Naive thymus-derived CD4-positive, alpha-beta T cell (primary cell): ENCODE measurements at regions of chr1 and their contacts with region 1.

Region 1: DNA sequence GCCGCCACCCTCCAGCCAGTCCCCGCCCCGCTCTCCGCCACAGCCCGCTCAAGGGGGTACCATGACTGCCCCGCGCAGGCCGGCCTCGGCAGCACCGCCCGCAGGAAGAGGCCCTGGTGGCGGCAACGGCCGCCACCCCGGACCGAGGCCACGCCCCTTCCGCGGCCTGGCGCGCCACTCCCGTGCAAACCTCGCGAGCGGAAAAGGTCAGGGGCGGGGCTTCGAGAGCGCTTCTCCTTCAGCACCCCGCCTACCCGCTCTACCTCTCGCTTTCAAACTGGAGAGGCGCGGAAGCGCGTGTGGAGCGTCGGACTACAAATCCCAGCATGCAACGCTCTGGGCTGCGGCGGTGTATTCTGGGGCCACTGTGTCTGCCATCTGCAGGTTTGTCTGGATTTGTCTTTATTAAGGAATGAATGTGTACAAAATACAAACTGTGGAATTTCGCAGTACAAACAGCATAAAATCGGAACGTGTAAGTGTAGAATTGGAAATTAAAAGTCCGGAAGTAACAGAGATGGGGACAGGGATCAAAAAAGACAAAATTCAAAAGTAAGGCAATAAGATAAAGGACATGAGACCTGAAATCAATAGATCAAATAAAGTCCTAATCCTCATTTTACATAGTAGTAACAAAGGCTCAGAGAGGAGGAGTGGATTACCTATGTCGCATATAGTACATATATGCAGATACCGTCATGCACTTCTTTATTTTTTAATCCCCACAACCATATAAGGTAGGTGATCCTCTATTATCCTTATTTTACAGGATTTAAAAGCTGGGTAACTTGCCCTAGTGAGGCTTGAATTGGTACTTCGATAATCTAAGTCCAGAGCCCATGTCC is 464 bp upstream of the ADSS2 start:
- DNase-seq: peak; percentile 93 to 99 (median 99)
- ATAC-seq: peak; percentile 94
- H3K4me3 ChIP-seq: peak overlapping the region; percentile 64
- H3K4me3 Mint-ChIP-seq: peak overlapping the region; percentile 76 to 99 (median 93)
- H3K27ac ChIP-seq: peak overlapping the region; percentile 96
- H3K27ac Mint-ChIP-seq: peak overlapping the region; percentile 85 to 99 (median 97)
- H3K4me1 ChIP-seq: peaks cover 27 to 36% of the 10 kb centered on the region in 2 donors
- H3K4me1 Mint-ChIP-seq: peaks cover 29 to 56% (median 41%) of the 10 kb centered on the region in 7 donors
- H3K27me3 ChIP-seq: no peaks in the 10 kb centered on the region
- H3K27me3 Mint-ChIP-seq: no peaks in the 10 kb centered on the region

Region 2: DNA sequence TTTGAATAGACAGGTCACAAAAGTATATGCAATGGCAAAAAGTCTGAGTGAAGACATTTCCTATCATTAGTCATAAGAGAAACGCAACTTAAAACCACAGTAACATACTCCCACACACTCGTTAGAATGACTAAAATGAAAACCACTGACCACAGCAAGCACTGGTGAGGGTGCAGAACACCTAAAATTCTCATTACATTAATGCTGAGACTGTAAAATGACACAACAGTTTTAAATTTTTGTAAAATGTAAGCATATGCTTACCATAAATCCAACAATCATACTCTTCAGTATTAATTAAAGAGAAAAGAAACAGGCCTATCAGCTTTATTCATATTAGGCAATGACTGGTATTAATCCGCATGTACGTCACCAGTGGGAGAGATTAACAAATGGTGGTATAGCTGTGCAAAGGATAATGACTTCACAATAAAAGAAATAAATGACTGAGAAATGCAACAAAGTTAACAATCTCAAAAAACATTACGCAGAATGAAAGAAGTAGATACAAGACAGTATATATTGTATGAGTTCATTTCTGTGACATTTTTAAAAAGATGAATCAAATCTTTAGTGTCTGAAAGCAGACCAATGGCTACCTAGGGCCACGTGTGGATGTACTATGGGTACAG is 855.6 kb before region 1 on chr1:
- CTCF ChIA-PET with region 1: no interaction called
- POLR2A ChIA-PET with region 1: no interaction called
- intact Hi-C with region 1: loop called in 1 of 2 experiments (anchors 5 kb)
- DNase-seq: peak in 1 of 9 donors; percentile 36
- ATAC-seq: peak; percentile 81
- H3K4me3 ChIP-seq: no peak overlapping the region
- H3K4me3 Mint-ChIP-seq: peak overlapping the region in 4 of 10 donors; percentile 6 to 73 (median 44)
- H3K27ac ChIP-seq: no peak overlapping the region
- H3K27ac Mint-ChIP-seq: peak overlapping the region in 5 of 9 donors; percentile 28 to 89 (median 40)
- H3K4me1 ChIP-seq: peaks cover 4 to 19% of the 10 kb centered on the region in 2 donors
- H3K4me1 Mint-ChIP-seq: peaks cover 23 to 48% (median 32%) of the 10 kb centered on the region in 7 donors
- H3K27me3 ChIP-seq: no peaks in the 10 kb centered on the region
- H3K27me3 Mint-ChIP-seq: no peaks in the 10 kb centered on the region

Region 3: GRCh38 chr1:244325056-244325764 is 127.0 kb before region 1 on chr1:
- CTCF ChIA-PET with region 1: interaction called, 3 read pairs
- POLR2A ChIA-PET with region 1: no interaction called
- intact Hi-C with region 1: loop called in 1 of 2 experiments (anchors 2 kb)
- DNase-seq: peak in 2 of 9 donors; percentile 5 to 11
- ATAC-seq: peak; percentile 76
- H3K4me3 ChIP-seq: no peak overlapping the region
- H3K4me3 Mint-ChIP-seq: peak overlapping the region in 6 of 10 donors; percentile 4 to 82 (median 70)
- H3K27ac ChIP-seq: no peak overlapping the region
- H3K27ac Mint-ChIP-seq: peak overlapping the region in 6 of 9 donors; percentile 4 to 92 (median 37)
- H3K4me1 ChIP-seq: peaks cover 0 to 28% of the 10 kb centered on the region in 2 donors
- H3K4me1 Mint-ChIP-seq: peaks cover 0 to 51% (median 0%) of the 10 kb centered on the region in 7 donors
- H3K27me3 ChIP-seq: no peaks in the 10 kb centered on the region
- H3K27me3 Mint-ChIP-seq: peaks cover 0 to 6% (median 4%) of the 10 kb centered on the region in 5 donors

Region 4: GRCh38 chr1:244435562-244436205 is 16.5 kb before region 1 on chr1:
- CTCF ChIA-PET with region 1: interaction called, 5 read pairs
- POLR2A ChIA-PET with region 1: no interaction called
- intact Hi-C with region 1: loop called (anchors 2 kb)
- DNase-seq: peak in 1 of 9 donors; percentile 42
- ATAC-seq: no peak
- H3K4me3 ChIP-seq: no peak overlapping the region
- H3K4me3 Mint-ChIP-seq: no peak overlapping the region
- H3K27ac ChIP-seq: no peak overlapping the region
- H3K27ac Mint-ChIP-seq: peak overlapping the region in 3 of 9 donors; percentile 19 to 80 (median 65)
- H3K4me1 ChIP-seq: no peaks in the 10 kb centered on the region
- H3K4me1 Mint-ChIP-seq: peaks cover 21 to 44% (median 35%) of the 10 kb centered on the region in 7 donors
- H3K27me3 ChIP-seq: no peaks in the 10 kb centered on the region
- H3K27me3 Mint-ChIP-seq: no peaks in the 10 kb centered on the region

Region 5: GRCh38 chr1:244802556-244803239 is 350.5 kb after region 1 on chr1:
- CTCF ChIA-PET with region 1: no interaction called
- POLR2A ChIA-PET with region 1: no interaction called
- intact Hi-C with region 1: no loop called
- DNase-seq: no peak
- ATAC-seq: no peak
- H3K4me3 ChIP-seq: no peak overlapping the region
- H3K4me3 Mint-ChIP-seq: no peak overlapping the region
- H3K27ac ChIP-seq: no peak overlapping the region
- H3K27ac Mint-ChIP-seq: no peak overlapping the region
- H3K4me1 ChIP-seq: no peaks in the 10 kb centered on the region
- H3K4me1 Mint-ChIP-seq: peaks cover 0 to 5% (median 4%) of the 10 kb centered on the region in 7 donors
- H3K27me3 ChIP-seq: no peaks in the 10 kb centered on the region
- H3K27me3 Mint-ChIP-seq: peaks cover 0 to 5% (median 0%) of the 10 kb centered on the region in 5 donors

Region 6: DNA sequence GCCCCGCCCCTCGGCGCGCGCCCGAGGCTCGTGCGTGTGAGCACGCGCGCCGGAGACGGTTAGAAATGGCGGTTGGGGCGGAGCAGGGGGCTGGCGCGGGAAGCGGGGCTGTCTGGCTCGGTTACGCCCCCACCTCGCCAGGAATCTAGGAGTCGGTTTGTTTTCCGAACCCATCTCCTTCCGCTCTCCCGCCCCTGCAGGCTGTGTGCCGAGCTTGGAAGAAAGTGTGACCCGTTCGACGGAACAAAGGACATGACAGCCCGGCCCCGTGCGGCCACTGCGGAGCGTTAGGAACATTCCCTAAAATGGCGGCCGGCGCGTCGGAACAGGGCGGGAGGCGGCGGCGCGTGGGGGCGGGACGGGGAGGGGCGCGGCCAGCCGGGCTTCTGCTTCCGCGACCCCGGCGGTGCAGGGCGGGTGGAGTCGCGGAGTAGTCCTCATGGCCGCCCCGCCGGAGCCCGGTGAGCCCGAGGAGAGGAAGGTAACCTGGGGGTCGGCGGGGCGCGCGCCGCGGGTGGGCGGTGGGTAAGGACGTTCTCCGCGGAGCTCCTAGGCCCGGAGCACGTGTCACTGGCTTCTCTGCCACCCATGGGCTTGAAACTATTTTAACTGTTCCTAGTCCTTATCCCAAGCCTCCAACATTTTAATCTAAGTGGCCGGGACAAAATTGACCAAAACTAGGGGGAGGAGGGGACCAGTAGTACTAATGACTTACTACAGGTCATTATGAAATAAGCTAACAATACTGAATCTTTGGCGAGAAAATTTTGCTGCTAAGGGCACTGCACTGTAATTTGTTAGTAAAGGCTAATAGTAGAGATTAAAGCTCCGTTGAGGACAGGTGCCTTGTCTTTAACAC is 383.3 kb after region 1 on chr1 and contains the start of gene COX20:
- CTCF ChIA-PET with region 1: no interaction called
- POLR2A ChIA-PET with region 1: interaction called, 22 read pairs
- intact Hi-C with region 1: loop called (anchors 1 kb)
- DNase-seq: peak; percentile 84 to 97 (median 93)
- ATAC-seq: peak; percentile 84
- H3K4me3 ChIP-seq: peak within 1 kb of the TSS; percentile 87
- H3K4me3 Mint-ChIP-seq: peak within 1 kb of the TSS; percentile 85 to 100 (median 97)
- H3K27ac ChIP-seq: peak within 1 kb of the TSS; percentile 96
- H3K27ac Mint-ChIP-seq: peak within 1 kb of the TSS; percentile 99 to 100 (median 100)
- H3K4me1 ChIP-seq: peaks cover 17 to 27% of the 10 kb centered on the region in 2 donors
- H3K4me1 Mint-ChIP-seq: peaks cover 34 to 55% (median 48%) of the 10 kb centered on the region in 7 donors
- H3K27me3 ChIP-seq: no peaks in the 10 kb centered on the region
- H3K27me3 Mint-ChIP-seq: no peaks in the 10 kb centered on the region
- total RNA-seq, gene COX20: 23.5 to 31.0 (median 27.8) TPM

Region 7: DNA sequence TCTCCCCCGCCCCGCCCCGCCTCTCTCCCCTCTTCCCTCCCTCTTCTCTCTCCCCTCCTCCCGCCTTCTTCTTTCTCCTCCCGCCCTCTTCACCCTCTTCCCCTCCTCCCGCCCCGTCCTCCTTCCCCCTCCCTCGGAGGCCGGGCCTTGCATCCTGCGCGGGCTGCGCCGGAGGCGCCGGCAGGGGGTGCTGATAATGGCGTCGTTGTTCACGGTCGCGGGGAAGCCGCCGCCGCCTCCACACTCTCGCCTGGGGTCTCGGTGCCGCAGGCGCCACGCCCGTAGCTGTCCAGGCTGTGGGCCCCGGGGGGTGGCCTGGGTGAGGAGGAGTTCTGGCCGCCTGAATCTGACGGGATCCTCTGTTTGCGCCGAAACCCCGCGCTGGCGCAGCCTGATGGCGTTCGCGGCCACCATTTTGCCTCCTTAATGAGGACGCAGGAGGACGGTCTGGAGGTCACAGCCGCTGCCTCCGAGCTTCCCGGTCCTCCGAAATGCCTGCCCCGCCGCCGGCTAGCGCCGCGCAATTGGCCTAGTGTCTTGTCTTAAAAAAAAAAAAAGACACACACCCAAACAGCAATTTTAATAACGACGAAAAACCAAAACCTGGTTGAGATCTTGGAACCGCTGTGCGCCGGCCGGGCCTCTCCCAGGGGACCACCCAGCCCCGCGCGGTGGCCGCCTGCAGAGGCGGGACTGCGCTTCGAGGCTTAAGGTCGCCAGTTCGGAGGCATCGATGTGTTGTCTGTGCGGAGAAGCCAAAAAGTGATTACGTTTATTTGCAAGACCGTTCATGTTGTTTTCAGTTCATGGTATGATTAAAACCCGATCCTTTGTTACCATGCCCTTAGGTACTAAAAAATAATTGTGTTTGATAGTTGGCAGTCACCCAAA is 518.7 kb after region 1 on chr1:
- CTCF ChIA-PET with region 1: no interaction called
- POLR2A ChIA-PET with region 1: interaction called, 8 read pairs
- intact Hi-C with region 1: loop called in 1 of 2 experiments (anchors 1 kb)
- DNase-seq: peak; percentile 91 to 97 (median 95)
- ATAC-seq: peak; percentile 88
- H3K4me3 ChIP-seq: peak overlapping the region; percentile 81
- H3K4me3 Mint-ChIP-seq: peak overlapping the region; percentile 91 to 95 (median 93)
- H3K27ac ChIP-seq: peak overlapping the region; percentile 99
- H3K27ac Mint-ChIP-seq: peak overlapping the region; percentile 97 to 100 (median 99)
- H3K4me1 ChIP-seq: peaks cover 5 to 12% of the 10 kb centered on the region in 2 donors
- H3K4me1 Mint-ChIP-seq: peaks cover 7 to 31% (median 25%) of the 10 kb centered on the region in 7 donors
- H3K27me3 ChIP-seq: no peaks in the 10 kb centered on the region
- H3K27me3 Mint-ChIP-seq: peaks cover 0 to 14% (median 0%) of the 10 kb centered on the region in 5 donors